Activated CD4-positive, alpha-beta memory T cell treated with anti-CD3 and anti-CD28 coated beads, Interleukin-2, amount 10 ng/mL, durations not matched to agents 7 days and 5 days (primary cell): ENCODE measurements at regions of chr2 and their contacts with region 1.

Region 1: DNA sequence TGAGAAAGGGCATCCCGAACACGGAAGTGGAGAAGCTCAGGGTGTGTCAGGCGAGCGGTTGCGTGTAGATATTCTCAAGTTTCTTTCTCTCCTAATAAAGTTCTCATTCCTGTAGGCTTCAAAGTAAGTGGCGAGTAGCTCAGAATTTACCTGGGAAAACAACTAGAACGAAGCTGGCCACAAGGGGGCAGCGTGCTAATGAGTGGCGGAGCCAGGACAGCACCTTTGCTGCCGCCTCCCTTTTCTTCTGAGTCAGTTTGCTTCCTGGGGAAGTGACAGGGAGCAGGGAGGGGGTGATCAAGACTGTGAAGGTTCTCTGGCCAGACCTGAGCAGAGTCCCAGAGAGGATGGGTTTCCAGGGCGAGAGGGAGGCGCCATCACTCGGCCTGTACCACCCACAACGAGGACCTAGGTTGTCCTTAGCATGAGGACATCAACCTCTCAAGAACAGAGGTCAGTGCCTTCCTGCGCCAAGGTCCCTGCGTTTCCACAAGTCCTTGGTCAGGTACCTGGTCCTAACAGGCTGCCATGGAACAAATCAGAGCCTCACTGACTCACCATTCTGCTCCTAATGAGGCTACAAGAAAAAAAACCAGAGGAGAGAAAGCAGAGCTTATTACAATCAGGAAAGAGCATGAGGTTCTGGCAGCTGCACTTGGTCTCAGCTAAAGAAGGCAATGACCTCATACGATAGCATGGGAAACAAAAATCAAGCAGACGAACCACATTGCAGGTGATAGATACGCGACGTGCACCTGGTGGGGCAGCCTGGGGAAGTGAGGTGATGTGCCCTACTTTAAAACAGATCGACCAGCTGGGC is 98.6 kb downstream of the PLB1 start:
- DNase-seq: peak; percentile 86
- H3K4me3 Mint-ChIP-seq: peak overlapping the region; percentile 16
- H3K27ac Mint-ChIP-seq: peak overlapping the region; percentile 41
- H3K4me1 Mint-ChIP-seq: peaks cover 18% of the 10 kb centered on the region
- H3K27me3 Mint-ChIP-seq: no peaks in the 10 kb centered on the region

Region 2: GRCh38 chr2:28527196-28527595 is 67.3 kb before region 1 on chr2:
- CTCF ChIA-PET with region 1: no interaction called
- POLR2A ChIA-PET with region 1: no interaction called
- DNase-seq: no peak
- H3K4me3 Mint-ChIP-seq: no peak overlapping the region
- H3K27ac Mint-ChIP-seq: no peak overlapping the region
- H3K4me1 Mint-ChIP-seq: peaks cover 9% of the 10 kb centered on the region
- H3K27me3 Mint-ChIP-seq: peaks cover 34% of the 10 kb centered on the region

Region 3: DNA sequence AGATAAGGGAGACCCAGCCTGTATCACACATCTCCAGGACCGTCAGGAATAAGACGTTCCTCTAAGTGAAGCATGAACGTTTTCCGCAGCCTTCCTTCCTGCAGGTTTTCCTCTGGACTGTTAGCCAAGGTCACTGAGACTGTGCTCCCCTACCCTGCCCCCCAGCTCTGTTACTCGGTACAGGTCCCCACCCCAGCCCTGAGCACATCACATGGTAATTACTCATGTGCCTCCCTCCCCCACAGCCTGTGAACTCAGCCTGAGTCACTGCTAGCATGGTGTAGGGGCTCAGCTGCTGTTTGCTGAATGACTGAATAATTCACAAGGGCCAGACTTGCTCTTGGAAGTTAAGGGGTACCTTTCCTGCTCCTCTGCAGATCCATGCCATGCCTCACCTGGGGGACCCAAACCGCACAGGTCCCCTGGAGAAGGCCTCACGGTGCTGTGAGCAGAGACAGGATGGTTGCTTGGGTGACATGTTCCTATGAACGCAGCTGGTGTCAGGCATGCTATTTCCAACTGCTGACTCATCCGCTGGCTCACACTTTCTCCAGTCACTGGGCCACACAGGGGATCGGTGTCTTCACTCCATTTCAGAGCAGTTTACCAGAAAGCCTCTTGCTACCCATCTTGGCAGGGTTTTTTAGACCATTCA is 10.5 kb before region 1 on chr2:
- CTCF ChIA-PET with region 1: interaction called, 18 read pairs
- POLR2A ChIA-PET with region 1: interaction called, 7 read pairs
- DNase-seq: peak; percentile 64
- H3K4me3 Mint-ChIP-seq: no peak overlapping the region
- H3K27ac Mint-ChIP-seq: peak overlapping the region; percentile 26
- H3K4me1 Mint-ChIP-seq: peaks cover 48% of the 10 kb centered on the region
- H3K27me3 Mint-ChIP-seq: no peaks in the 10 kb centered on the region

Region 4: DNA sequence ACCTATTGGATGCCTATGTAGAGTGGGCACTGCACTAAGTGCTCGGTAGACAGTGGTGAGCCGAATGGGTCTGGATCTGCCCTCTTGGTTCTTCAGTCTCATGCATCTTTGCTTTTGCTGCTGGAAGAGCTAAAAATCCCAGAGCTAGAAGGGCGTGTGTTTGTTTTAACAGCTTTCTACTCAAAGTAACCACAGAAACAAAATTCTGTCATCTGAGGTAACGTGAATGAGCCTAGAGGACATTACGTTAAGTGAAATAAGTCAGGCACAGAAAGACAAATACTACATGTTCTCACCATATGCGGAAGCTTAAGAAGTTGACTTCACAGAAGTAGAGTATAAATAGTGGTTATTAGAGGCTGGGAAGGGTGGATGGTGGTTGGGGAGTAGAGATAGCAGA is 21.2 kb after region 1 on chr2:
- CTCF ChIA-PET with region 1: interaction called, 72 read pairs
- POLR2A ChIA-PET with region 1: interaction called, 27 read pairs
- DNase-seq: no peak
- H3K4me3 Mint-ChIP-seq: no peak overlapping the region
- H3K27ac Mint-ChIP-seq: no peak overlapping the region
- H3K4me1 Mint-ChIP-seq: peaks cover 47% of the 10 kb centered on the region
- H3K27me3 Mint-ChIP-seq: no peaks in the 10 kb centered on the region

Region 5: GRCh38 chr2:28656937-28657615 is 62.6 kb after region 1 on chr2:
- CTCF ChIA-PET with region 1: no interaction called
- POLR2A ChIA-PET with region 1: no interaction called
- DNase-seq: no peak
- H3K4me3 Mint-ChIP-seq: no peak overlapping the region
- H3K27ac Mint-ChIP-seq: no peak overlapping the region
- H3K4me1 Mint-ChIP-seq: peaks cover 15% of the 10 kb centered on the region
- H3K27me3 Mint-ChIP-seq: no peaks in the 10 kb centered on the region

Region 6: DNA sequence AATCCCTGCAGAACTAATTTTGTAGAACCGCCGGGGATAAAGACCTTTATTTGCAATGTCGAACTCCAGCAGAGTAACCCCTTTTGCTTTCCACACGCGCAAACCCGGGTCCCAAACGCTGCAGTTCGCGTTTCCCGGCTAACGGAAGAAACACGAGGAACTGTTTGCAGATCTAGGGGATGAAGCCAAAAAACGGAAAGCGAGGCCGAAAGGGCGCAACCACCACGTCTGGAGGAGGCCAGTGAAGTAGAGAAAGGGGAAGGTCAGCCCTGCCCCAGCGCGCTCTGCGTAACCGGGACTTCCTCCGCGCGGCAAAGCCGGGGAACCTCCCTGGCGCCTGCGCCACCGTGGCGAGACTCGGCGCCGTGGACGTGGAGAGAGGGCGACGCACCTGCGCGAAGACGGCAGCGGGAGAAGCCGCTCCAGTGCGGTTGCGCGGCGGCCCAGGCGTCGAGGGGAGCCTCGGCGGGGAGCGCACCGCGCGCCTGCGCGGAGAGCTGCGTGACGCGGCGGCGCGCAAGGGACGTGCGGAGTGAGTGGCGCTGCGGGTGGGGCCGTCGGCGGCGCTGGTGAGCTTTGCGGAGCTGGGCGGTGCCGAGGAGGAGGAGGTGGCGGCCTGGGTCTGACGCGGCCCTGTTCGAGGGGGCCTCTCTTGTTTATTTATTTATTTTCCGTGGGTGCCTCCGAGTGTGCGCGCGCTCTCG is 156.9 kb after region 1 on chr2 and contains the start of gene PPP1CB:
- CTCF ChIA-PET with region 1: interaction called, 108 read pairs
- POLR2A ChIA-PET with region 1: interaction called, 50 read pairs
- DNase-seq: peak; percentile 96
- H3K4me3 Mint-ChIP-seq: peak within 1 kb of the TSS; percentile 91
- H3K27ac Mint-ChIP-seq: peak within 1 kb of the TSS; percentile 94
- H3K4me1 Mint-ChIP-seq: peaks cover 57% of the 10 kb centered on the region
- H3K27me3 Mint-ChIP-seq: no peaks in the 10 kb centered on the region
- total RNA-seq, gene PPP1CB: 211 to 213 TPM

Region 7: GRCh38 chr2:28780496-28780895 is 186.0 kb after region 1 on chr2:
- CTCF ChIA-PET with region 1: interaction called, 18 read pairs
- POLR2A ChIA-PET with region 1: no interaction called
- DNase-seq: no peak
- H3K4me3 Mint-ChIP-seq: no peak overlapping the region
- H3K27ac Mint-ChIP-seq: no peak overlapping the region
- H3K4me1 Mint-ChIP-seq: peaks cover 14% of the 10 kb centered on the region
- H3K27me3 Mint-ChIP-seq: no peaks in the 10 kb centered on the region

Region 8: GRCh38 chr2:28821295-28821958 is 226.9 kb after region 1 on chr2:
- CTCF ChIA-PET with region 1: interaction called, 11 read pairs
- POLR2A ChIA-PET with region 1: no interaction called
- DNase-seq: peak; percentile 53
- H3K4me3 Mint-ChIP-seq: no peak overlapping the region
- H3K27ac Mint-ChIP-seq: no peak overlapping the region
- H3K4me1 Mint-ChIP-seq: peaks cover 3% of the 10 kb centered on the region
- H3K27me3 Mint-ChIP-seq: peaks cover 2% of the 10 kb centered on the region